ENCODE measurements at regions of chr15 and their contacts with region 1.

Region 1: DNA sequence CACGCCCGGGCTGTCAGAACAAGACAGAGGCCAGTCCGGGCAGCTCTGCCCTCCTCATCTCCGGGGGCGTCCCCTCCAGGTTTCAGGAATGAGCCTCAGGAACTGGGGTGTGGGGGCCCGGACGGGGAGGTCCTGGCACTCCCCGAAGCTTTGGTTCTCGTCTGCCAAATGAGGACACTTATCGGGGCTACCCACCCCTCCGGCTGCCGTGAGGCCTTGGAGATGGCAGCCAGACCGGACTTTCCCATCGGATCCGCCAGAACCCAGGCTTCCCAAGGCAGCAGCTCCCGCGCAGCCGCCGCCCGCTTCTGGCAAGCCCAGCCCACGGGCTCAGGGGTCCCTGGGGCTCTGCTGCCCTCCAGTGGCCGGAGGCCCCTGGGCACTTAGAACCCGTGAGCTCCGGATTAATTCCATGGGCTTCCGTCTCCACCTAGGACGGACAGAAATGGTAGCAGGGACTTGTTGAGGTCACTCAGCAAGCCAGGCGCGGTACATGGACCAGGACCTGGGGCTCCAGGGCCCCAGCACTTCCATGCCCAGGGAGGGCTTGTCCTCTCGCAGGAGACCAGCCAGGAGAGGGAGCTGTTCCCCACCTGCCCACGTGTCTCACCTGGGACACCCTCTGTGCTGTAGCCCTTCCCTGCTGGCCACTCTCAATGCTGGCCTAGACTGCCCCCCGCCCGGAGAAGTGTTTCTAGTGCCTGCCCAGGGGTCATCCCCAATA is 89.4 kb downstream of the LINGO1 start:
- DNase-seq: peak; percentile 94
- ATAC-seq: peak; percentile 94

Region 2: DNA sequence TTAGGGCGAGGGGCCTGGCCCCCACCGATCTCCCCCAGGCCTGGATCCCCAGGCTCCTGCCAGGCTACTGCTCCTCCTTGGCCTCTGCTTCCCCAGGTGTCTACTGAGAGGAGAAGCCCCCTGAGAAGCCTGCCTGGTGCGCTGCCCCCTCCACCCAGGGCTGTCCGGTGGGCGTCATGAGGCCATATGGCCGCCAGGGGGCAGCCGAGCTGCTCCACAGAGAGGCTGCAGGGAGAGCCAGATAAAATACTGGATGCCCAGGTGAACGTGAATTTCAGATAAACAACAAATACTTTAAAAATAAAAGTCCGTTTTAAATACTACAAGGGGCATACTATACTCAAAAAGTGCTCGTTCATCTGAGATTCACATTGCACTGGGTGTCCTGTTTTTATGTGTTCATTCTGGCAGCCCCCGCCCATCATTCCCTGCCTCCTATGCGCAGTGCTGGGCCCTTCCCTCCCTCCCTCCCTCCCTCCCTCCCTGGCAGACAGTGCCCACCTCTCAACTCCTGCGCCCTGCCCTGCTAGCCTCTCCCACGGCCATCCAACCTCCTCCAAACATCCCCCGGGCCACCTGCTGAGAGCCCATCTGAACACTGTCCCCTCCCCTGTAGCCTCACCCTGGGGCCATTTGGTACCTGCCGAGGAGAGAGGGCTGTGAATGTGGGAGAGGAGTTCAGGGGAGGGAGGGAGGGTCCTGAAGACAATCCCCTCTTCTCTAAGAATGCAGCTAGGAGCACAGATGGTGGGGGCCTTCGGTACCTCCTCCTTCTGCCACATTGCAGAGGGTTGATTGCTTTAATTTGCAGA is 518.8 kb before region 1 on chr15:
- intact Hi-C with region 1: loop called (anchors 5 kb)
- DNase-seq: peak; percentile 83
- ATAC-seq: peak; percentile 62

Region 3: GRCh38 chr15:77118882-77119321 is 424.4 kb before region 1 on chr15:
- intact Hi-C with region 1: loop called (anchors 2 kb)
- DNase-seq: no peak
- ATAC-seq: peak; percentile 88

Region 4: DNA sequence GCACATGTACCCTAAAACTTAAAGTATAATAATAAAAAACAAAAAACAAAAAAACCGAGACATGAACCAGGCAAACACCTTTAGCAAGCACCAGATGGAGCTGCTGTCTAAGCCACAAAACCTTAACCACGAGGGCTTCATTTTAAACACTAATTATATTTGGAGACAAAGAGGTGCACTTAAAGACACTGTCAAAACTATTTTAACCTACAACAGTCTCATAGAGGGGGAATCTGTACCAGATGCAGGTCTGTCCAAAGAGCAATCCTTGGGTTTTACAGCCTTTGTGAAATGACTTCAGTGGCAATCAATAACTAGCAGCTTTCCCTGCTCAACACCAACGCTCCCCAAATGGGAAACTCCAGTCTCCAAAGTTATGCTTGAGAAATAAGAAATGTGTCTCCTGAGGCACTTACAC is 356.7 kb before region 1 on chr15:
- intact Hi-C with region 1: loop called (anchors 5 kb)
- DNase-seq: no peak
- ATAC-seq: peak; percentile 68

Region 5: GRCh38 chr15:77475898-77476297 is 67.4 kb before region 1 on chr15:
- intact Hi-C with region 1: no loop called
- DNase-seq: no peak
- ATAC-seq: no peak

Region 6: DNA sequence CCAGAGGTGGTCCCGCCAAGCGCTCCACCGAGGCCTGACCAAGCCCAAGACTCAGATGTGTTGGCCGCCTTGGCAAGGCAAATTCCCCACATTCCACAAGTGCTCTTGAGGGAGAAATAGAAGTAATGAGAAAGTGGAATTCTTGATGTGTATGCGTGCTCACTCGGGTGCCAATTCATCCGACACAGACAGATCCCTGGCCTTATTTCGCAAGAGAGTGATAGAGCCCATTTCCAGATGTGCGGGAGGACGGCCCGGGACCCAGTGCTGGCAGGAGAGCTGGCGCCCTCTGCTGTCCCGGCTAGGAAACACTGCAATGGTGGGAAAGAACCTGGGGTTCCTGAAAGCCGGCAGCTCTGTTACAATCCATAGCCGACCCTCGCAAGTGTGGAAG is 46.6 kb before region 1 on chr15:
- intact Hi-C with region 1: no loop called
- DNase-seq: peak; percentile 95
- ATAC-seq: peak; percentile 86

Region 7: DNA sequence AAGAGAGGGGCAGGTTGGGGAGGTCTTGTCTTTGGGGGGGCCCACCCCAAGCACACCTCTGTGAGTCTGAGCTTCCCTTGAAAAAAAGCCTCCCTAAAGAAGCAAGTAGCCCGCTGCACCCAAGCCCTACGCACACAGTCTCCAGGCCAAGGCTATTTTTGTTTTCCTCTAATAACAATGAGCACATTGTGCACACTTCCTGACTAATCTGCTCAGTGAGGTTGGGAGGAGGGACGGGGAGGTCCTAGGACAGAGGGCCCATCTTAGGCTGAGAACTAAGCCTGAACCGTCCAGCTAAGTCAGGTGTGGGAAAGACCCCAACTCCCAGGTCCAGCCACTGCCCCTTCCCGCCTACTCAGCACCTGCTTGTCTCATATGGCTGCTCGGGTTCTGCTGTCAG is 35.4 kb before region 1 on chr15:
- intact Hi-C with region 1: loop called (anchors 5 kb)
- DNase-seq: peak; percentile 83
- ATAC-seq: peak; percentile 89